GM23248 (cell line): ENCODE measurements at regions of chr20 and their contacts with region 1.

Region 1: DNA sequence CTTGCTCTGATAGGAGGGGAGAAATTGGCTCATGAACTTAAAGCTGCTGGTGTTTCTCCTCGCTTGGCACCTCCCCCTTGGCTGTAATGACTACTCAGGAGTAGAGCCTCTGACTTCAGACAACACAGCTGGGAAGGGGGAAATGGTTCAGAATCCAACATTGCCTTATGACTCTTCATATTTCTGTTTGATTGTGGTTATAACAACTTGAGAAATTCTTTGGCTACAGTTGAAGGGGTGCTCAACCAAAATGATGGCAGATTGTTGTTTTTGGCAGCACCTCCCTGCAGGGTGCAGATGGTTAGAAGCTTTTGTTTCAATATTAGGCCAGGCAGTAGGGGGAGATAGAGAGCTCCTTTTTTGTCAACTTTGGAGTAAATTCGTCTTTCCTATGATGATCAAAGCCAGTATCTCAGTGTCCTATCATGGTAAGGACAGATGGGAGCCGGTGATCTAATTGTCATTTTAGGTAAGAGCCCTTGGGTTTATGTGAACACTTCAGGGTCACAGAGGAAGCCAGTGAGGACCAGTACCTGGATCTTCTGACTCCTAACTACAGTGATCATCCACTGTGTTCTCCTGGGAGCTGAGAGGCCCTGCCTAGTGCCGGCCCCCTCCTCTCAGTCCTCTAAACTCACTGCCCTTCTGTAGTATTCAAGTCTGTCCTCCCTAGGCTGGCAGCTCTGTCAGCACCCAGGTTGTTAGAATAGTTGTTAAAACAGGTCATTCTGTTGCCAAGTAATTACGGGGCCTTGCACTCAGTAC is 39.9 kb downstream of the RPRD1B start:
- DNase-seq: peak; percentile 89
- H3K4me3 ChIP-seq: no peak overlapping the region
- H3K27ac ChIP-seq: 0 out of 2 replicates have a peak overlapping the region, but pooled peaks have one; percentile 20
- H3K4me1 ChIP-seq: peaks cover 24% of the 10 kb centered on the region
- H3K27me3 ChIP-seq: no peaks in the 10 kb centered on the region

Region 2: DNA sequence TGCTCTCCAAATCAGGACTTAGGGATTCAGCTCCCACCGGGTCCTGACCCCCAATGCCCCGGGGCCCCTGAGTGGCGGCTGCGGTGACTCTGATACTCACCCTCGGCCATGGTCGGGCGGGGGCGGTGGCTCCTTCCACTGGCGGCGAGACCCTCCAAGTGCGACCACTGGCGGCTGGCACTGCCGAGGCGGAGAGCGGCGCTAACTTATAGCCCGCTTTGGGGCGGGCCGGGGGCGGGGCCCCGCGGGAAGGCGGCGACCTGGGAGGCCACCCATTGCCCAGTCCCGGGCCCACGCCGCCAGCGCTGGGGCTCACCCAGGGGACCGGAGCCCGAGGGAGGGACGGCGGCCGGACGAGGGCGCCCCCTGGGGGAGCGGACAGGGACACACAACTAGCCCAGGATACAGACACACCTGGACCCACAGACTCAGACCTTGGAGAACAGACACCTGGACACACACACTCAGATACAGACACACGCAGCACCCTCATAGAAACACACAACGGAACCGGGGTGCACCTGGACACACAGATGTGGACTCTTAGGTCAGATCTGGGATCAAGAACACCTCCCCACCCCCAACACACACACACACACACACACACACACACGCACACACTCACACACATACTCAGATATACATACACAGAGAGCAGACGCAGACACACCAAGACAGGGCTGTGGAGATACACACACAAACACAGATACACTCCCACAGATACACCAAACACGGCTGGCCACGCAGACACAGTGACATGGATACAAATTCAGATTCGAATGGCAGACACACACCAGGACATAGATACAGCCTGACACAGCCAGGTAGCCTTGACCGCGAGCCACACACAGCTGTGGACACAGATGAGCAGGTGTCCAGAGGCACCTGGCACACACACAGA is 91.8 kb after region 1 on chr20 and contains the start of gene TGM2:
- in situ Hi-C with region 1: loop called (anchors 10 kb)
- DNase-seq: peak; percentile 78
- H3K4me3 ChIP-seq: peak within 1 kb of the TSS; percentile 64
- H3K27ac ChIP-seq: no peak within 1 kb of the TSS
- H3K4me1 ChIP-seq: peaks cover 18% of the 10 kb centered on the region
- H3K27me3 ChIP-seq: no peaks in the 10 kb centered on the region
- total RNA-seq, gene TGM2: 311 and 339 TPM in 2 replicates

Region 3: GRCh38 chr20:38221119-38221589 is 147.7 kb after region 1 on chr20:
- in situ Hi-C with region 1: loop called (anchors 5 kb)
- DNase-seq: peak; percentile 68
- H3K4me3 ChIP-seq: no peak overlapping the region
- H3K27ac ChIP-seq: no peak overlapping the region
- H3K4me1 ChIP-seq: peaks cover 25% of the 10 kb centered on the region
- H3K27me3 ChIP-seq: no peaks in the 10 kb centered on the region